Activated naive CD4-positive, alpha-beta T cell treated with anti-CD3 and anti-CD28 coated beads, Interleukin-2, amount 10 ng/mL, durations not matched to agents 7 days and 5 days (primary cell): ENCODE measurements at regions of chr1 and their contacts with region 1.

Region 1: GRCh38 chr1:26692793-26693490 is 2.9 kb upstream of the ARID1A start:
- DNase-seq: peak; percentile 96
- H3K4me3 Mint-ChIP-seq: peak overlapping the region; percentile 87
- H3K27ac Mint-ChIP-seq: peak overlapping the region; percentile 97
- H3K4me1 Mint-ChIP-seq: peaks cover 29% of the 10 kb centered on the region
- H3K27me3 Mint-ChIP-seq: peaks cover 4% of the 10 kb centered on the region

Region 2: GRCh38 chr1:26677306-26678115 is 15.4 kb before region 1 on chr1:
- CTCF ChIA-PET with region 1: interaction called, 28 read pairs
- DNase-seq: peak; percentile 63
- H3K4me3 Mint-ChIP-seq: no peak overlapping the region
- H3K27ac Mint-ChIP-seq: peak overlapping the region; percentile 30
- H3K4me1 Mint-ChIP-seq: peaks cover 22% of the 10 kb centered on the region
- H3K27me3 Mint-ChIP-seq: peaks cover 9% of the 10 kb centered on the region